Colonic mucosa (tissue), 4 donors: ENCODE measurements at regions of chr13 and their contacts with region 1.

Region 1: DNA sequence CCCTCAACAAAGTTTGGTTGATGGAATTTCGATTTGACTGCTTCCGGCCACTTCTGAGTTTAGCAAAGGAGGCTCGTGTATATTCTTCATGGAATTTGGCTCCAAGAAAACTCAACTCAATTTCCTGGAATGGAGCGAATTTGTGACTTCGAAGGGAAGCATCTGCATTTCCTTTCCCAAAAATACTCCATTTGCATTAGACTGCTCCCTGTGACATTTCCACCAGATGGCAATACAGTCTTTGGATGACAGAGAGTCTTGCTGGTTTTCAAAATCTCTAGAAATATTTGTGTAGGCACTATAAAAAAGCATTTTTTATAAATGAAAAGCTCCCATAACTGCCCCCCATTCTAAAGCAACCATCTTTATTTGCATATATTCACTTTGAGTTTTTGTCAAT is 4.1 kb downstream of the C1QTNF9 start:
- DNase-seq: no peak
- H3K4me3 ChIP-seq: no peak overlapping the region
- H3K27ac ChIP-seq: no peak overlapping the region
- H3K4me1 ChIP-seq: no peaks in the 10 kb centered on the region
- H3K27me3 ChIP-seq: no peaks in the 10 kb centered on the region
- CTCF ChIP-seq: peak; percentile 11

Region 2: GRCh38 chr13:24557081-24557480 is 243.6 kb after region 1 on chr13:
- intact Hi-C with region 1: loop called (anchors 10 kb)
- DNase-seq: no peak
- H3K4me3 ChIP-seq: no peak overlapping the region
- H3K27ac ChIP-seq: no peak overlapping the region
- H3K4me1 ChIP-seq: no peaks in the 10 kb centered on the region
- H3K27me3 ChIP-seq: no peaks in the 10 kb centered on the region
- CTCF ChIP-seq: no peak